ENCODE measurements at regions of chr14 and their contacts with region 1.

Region 1: DNA sequence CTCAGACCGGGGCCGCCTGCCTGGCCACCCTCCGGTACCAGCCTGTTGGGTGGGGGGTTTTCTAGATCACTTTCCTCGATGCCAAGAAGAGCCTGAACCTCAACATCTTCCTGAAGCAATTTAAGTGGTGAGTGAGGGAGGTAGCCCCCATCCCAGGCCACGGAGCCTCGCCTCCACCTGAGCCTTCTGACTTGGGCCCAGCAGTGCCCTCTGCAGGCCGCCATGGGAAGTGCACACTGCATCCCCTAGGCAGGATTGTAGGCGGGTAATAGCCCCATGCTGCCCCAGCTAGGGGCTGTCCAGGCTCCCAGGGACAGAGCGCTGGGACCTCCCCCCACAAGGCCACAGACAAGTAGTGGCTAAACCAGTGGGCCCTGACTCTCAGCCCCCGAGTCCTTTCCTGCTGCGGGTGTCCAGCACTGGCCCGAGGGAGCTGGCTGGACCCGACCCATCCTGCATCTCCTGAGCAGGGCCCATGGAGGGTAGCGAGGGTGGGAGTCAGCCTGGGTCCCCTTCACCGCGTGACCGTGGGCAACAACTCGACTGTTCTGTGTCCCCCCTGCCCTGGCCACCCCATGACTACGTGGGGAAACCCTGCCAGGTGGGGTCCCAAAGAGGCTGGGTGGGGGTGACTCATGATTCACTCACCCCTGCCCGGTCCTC is 15.3 kb upstream of the ADSS1 start:
- DNase-seq: peak; percentile 93
- CTCF ChIP-seq: peak; percentile 95

Region 2: GRCh38 chr14:104554608-104555429 is 153.9 kb before region 1 on chr14:
- CTCF ChIA-PET with region 1: no interaction called
- POLR2A ChIA-PET with region 1: no interaction called
- DNase-seq: no peak
- CTCF ChIP-seq: no peak

Region 3: GRCh38 chr14:104633276-104634137 is 75.2 kb before region 1 on chr14:
- CTCF ChIA-PET with region 1: no interaction called
- POLR2A ChIA-PET with region 1: no interaction called
- DNase-seq: no peak
- CTCF ChIP-seq: no peak

Region 4: GRCh38 chr14:104680801-104681688 is 27.7 kb before region 1 on chr14:
- CTCF ChIA-PET with region 1: interaction called, 14 read pairs
- POLR2A ChIA-PET with region 1: no interaction called
- DNase-seq: peak; percentile 72
- CTCF ChIP-seq: peak; percentile 43

Region 5: DNA sequence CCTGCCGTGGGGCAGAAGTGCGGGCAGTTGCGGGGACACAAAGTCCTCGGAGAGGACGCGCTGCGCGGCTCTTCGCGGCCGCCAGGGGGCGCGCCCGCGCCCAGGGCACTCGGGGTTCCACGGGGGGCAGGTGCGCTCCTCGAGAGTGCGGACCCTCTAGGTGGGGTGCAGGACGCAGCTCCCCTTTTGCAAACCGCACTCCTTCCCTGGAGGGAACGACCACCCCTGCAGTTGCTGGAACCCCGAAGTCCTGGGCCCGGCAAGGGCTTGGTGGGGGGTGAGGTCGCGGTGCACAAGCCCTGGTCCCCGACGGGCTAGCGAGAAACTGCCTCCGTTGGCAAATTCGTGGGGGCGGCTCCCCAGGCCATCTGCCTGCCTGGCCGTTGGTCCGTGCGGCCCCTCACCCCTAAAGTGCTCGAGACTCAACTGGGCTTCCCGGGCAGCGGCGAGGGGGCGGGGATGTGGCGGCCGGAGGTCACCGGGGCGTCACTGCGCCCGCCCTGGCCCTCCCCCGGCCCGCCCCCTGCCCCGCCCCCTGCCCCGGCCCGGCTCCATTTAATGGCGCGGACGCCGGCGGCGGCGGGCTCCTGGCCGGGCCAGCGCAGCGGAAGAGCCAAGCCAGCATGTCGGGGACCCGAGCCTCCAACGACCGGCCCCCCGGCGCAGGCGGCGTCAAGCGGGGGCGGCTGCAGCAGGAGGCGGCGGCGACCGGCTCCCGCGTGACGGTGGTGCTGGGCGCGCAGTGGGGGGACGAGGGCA is 15.1 kb after region 1 on chr14 and contains the start of gene ADSS1:
- CTCF ChIA-PET with region 1: interaction called, 24 read pairs
- POLR2A ChIA-PET with region 1: no interaction called
- DNase-seq: peak; percentile 92
- CTCF ChIP-seq: peak; percentile 91

Region 6: GRCh38 chr14:104752735-104753531 is 44.2 kb after region 1 on chr14 and contains the start of gene SIVA1:
- CTCF ChIA-PET with region 1: interaction called, 10 read pairs
- POLR2A ChIA-PET with region 1: no interaction called
- DNase-seq: peak; percentile 100
- CTCF ChIP-seq: no peak